Left cardiac atrium (tissue), 4 donors: ENCODE measurements at regions of chr5 and their contacts with region 1.

Region 1: GRCh38 chr5:10503997-10504793 is 59.7 kb upstream of the ANKRD33B start:
- DNase-seq: no peak
- ATAC-seq: peak; percentile 48 to 53

Region 2: GRCh38 chr5:10460252-10460906 is 43.8 kb before region 1 on chr5:
- intact Hi-C with region 1: loop called in 1 of 2 experiments (anchors 5 kb)
- DNase-seq: peak; percentile 86
- ATAC-seq: peak; percentile 89 to 90